ENCODE measurements at regions of chr16 and their contacts with region 1.

Region 1: DNA sequence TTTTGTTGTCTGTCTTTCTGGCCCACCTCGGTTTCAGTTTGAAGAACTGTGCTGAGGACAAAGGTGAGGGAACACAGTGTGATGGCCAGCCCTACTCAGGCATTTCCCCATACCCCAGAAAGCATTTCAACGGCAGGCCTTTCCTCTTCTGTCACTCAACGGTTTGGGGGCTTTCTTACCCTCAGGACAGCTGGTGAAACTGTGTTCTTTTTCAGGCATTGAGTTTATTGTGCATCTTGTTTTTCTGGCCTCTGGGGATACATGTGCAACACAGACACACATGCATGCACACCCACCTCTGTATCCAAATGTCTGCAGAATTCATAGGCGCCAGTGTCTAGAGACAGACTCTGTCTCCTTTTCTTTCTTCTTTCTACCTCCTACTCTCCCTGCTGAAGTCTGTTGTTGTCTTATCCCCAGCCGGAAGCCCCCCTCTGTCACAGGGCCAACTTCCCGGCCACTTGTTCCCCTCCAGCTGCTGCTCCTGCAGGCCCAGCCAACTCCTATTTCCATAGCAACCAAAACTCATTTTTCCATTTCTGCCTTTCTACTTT is 17.0 kb downstream of the CHD9 start:
- DNase-seq: peak; percentile 88
- H3K4me3 ChIP-seq: peak overlapping the region in 1 of 3 experiments; percentile 23
- H3K27ac ChIP-seq: peak overlapping the region; percentile 5
- H3K4me1 ChIP-seq: peaks cover 11% of the 10 kb centered on the region
- H3K27me3 ChIP-seq: no peaks in the 10 kb centered on the region
- CTCF ChIP-seq: no peak
- POLR2A ChIP-seq: no peak

Region 2: GRCh38 chr16:52912565-52913173 is 159.2 kb before region 1 on chr16:
- CTCF ChIA-PET with region 1: no interaction called
- POLR2A ChIA-PET with region 1: no interaction called
- dilution Hi-C with region 1: no loop called
- intact Hi-C with region 1: no loop called
- DNase-seq: peak; percentile 48
- H3K4me3 ChIP-seq: no peak overlapping the region
- H3K27ac ChIP-seq: no peak overlapping the region
- H3K4me1 ChIP-seq: no peaks in the 10 kb centered on the region
- H3K27me3 ChIP-seq: no peaks in the 10 kb centered on the region
- CTCF ChIP-seq: peak; percentile 56 to 68
- POLR2A ChIP-seq: no peak

Region 3: GRCh38 chr16:53022374-53022773 is 49.5 kb before region 1 on chr16:
- CTCF ChIA-PET with region 1: no interaction called
- POLR2A ChIA-PET with region 1: no interaction called
- dilution Hi-C with region 1: no loop called
- intact Hi-C with region 1: no loop called
- DNase-seq: peak; percentile 53
- H3K4me3 ChIP-seq: no peak overlapping the region
- H3K27ac ChIP-seq: no peak overlapping the region
- H3K4me1 ChIP-seq: no peaks in the 10 kb centered on the region
- H3K27me3 ChIP-seq: no peaks in the 10 kb centered on the region
- CTCF ChIP-seq: peak; percentile 49 to 54
- POLR2A ChIP-seq: no peak

Region 4: GRCh38 chr16:53159781-53160436 is 88.1 kb after region 1 on chr16:
- CTCF ChIA-PET with region 1: no interaction called
- POLR2A ChIA-PET with region 1: no interaction called
- dilution Hi-C with region 1: no loop called
- intact Hi-C with region 1: loop called (anchors 5 kb)
- DNase-seq: peak; percentile 70
- H3K4me3 ChIP-seq: no peak overlapping the region
- H3K27ac ChIP-seq: no peak overlapping the region
- H3K4me1 ChIP-seq: no peaks in the 10 kb centered on the region
- H3K27me3 ChIP-seq: no peaks in the 10 kb centered on the region
- CTCF ChIP-seq: peak; percentile 54 to 66
- POLR2A ChIP-seq: no peak